ENCODE measurements at regions of chr11 and their contacts with region 1.

Region 1: GRCh38 chr11:67776852-67777520 is 102.6 kb upstream of the ALDH3B2 start:
- DNase-seq: no peak
- H3K4me3 ChIP-seq: no peak overlapping the region
- CTCF ChIP-seq: no peak
- POLR2A ChIP-seq: no peak

Region 2: DNA sequence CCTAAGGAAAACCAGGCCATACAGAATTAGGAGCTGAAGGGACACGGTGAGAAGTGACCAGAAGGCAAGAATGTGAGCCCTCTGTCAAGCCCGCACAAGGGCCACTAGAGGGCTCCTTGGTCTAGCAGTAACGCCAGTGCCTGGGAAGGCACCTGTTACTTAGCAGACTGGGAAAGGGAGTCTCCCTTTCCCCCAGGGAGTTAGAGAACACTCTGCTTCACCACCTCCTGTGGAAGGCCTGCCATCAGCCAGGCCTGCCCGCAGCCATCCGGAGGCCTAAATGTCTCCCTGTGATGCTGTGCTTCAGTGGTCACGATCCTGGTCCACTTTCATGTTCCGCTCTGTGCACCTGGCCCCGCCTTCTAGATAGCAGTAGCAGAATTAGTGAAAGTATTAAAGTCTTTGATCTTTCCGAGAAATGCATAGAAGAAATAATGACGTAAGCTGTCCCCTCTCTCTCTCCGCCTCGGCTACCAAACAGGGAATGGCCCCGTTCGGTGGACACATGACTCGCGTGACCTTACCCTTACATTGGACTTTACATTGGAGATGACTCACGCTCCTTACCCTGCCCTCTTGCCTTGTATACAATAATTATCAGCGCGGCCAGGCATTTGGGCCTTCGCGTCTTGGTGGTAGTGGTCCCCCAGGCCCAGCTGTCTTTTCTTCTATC is 204.1 kb before region 1 on chr11:
- intact Hi-C with region 1: loop called (anchors 5 kb)
- DNase-seq: no peak
- H3K4me3 ChIP-seq: no peak overlapping the region
- CTCF ChIP-seq: peak in 1 of 3 donors; percentile 21
- POLR2A ChIP-seq: no peak

Region 3: GRCh38 chr11:67583247-67584204 is 193.5 kb before region 1 on chr11 and contains the start of gene GSTP1:
- intact Hi-C with region 1: no loop called
- DNase-seq: peak; percentile 86 to 98
- H3K4me3 ChIP-seq: peak within 1 kb of the TSS; percentile 68
- CTCF ChIP-seq: no peak
- POLR2A ChIP-seq: peak in 1 of 2 donors; percentile 68
- total RNA-seq, gene GSTP1: 1,126 to 2,386 (median 2,019) TPM

Region 4: DNA sequence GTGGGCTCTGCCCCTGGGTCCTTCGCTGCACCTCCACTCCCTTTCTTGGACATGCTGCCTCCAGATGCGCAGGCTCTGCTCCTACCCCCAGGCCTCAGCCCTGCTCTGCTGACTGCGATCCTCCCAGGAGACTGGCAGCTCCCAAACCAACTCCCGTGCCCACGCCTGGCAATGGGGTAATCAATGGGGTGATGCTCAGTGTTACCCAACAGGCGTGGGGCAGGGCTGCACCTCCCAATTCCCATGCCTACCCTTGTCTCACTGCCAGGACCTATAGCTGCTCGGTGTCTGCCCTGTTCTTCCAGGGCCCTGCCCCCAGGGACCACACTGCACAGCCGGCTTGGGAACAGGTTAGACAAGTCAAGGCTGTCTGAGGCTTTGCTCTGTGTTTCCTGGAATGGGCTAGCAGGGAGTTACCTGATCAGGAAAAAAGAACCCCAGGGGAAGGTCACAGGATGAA is 102.5 kb before region 1 on chr11 and contains the start of gene ALDH3B2:
- intact Hi-C with region 1: no loop called
- DNase-seq: peak; percentile 77 to 90
- H3K4me3 ChIP-seq: no peak within 1 kb of the TSS
- CTCF ChIP-seq: no peak
- POLR2A ChIP-seq: no peak
- total RNA-seq, gene ALDH3B2: 127 to 221 (median 170) TPM

Region 5: GRCh38 chr11:69257838-69258658 is 1481.1 kb after region 1 on chr11:
- intact Hi-C with region 1: no loop called
- DNase-seq: no peak
- H3K4me3 ChIP-seq: no peak overlapping the region
- CTCF ChIP-seq: no peak
- POLR2A ChIP-seq: no peak